Cardiac septum (tissue), 1 donor: ENCODE measurements at regions of chr2 and their contacts with region 1.

Region 1: DNA sequence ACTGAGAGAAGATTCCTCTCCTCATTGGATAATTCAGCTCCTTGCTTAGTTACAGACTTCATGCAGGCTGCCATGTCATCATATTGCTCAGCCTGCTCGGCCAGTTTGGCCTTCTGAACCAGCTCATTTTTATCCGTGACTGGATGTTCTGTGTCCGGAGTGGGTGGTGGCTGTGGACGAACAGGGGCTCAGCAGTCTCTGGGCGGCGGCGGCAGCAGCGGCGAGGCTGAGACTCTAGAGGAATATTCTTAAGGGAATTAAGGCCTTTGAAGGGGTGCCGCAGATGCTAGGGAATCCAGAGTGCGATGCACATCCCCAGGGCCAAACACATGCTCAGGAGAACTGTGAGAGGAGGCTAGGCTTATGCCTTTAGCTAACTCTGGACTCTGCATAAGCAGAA is 97.9 kb upstream of the GYPC start:
- DNase-seq: no peak

Region 2: DNA sequence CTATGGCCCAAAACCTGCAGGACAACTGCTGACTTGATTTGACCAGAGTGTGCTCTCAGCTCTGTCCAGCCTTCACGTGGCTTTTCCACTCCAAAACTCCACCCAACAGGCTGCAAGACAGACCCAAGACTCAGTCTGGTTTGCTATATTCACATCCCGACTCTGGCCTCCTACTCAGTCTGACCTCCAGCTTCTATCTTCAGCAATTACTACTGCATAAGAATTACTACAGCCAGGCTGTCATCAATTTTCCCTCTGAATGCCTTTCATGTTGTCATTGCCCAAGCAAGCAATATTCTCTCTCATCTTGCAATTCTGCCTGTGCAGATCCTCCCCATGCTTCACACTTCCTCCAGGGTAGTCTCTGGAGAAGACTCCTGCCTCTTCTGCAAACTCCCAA is 44.3 kb after region 1 on chr2:
- intact Hi-C with region 1: loop called (anchors 2 kb)
- DNase-seq: no peak